PC-3 (cell line): ENCODE measurements at regions of chr6 and their contacts with region 1.

Region 1: GRCh38 chr6:146700078-146700686 is 101.4 kb downstream of the ADGB start:
- DNase-seq: peak; percentile 83
- ATAC-seq: no peak
- H3K4me3 ChIP-seq: no peak overlapping the region
- H3K27ac ChIP-seq: no peak overlapping the region
- H3K4me1 ChIP-seq: no peaks in the 10 kb centered on the region
- H3K27me3 ChIP-seq: no peaks in the 10 kb centered on the region
- CTCF ChIP-seq: peak; percentile 78

Region 2: DNA sequence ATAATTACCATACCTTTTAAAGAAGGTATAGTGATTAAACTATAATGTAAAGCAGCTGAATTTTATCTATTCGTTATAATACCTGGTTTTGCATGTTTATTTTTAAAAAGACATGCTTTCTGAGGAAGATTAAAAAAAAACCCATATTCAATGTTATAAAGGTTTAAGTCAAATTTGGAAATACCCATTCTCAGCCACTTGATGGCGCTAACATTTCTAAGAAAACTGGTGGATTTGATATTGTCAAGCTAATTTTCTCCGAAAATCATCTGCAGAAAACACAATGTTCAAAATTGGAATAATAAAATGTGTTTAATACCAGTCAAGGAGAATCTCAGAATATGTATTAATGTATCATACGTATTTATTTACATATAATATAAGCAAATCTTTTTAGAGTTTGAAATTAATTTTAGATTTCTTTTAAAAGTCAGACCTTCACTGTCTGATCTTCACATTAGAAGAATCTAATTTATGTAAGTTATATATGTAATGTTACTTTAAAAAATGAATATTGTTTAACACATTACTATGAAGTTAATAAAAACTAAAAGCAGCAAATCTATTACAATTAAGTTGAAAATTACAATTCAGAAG is 771.0 kb before region 1 on chr6:
- CTCF ChIA-PET with region 1: no interaction called
- POLR2A ChIA-PET with region 1: no interaction called
- intact Hi-C with region 1: loop called (anchors 2 kb)
- DNase-seq: peak; percentile 46
- ATAC-seq: no peak
- H3K4me3 ChIP-seq: no peak overlapping the region
- H3K27ac ChIP-seq: no peak overlapping the region
- H3K4me1 ChIP-seq: no peaks in the 10 kb centered on the region
- H3K27me3 ChIP-seq: no peaks in the 10 kb centered on the region
- CTCF ChIP-seq: peak; percentile 67

Region 3: DNA sequence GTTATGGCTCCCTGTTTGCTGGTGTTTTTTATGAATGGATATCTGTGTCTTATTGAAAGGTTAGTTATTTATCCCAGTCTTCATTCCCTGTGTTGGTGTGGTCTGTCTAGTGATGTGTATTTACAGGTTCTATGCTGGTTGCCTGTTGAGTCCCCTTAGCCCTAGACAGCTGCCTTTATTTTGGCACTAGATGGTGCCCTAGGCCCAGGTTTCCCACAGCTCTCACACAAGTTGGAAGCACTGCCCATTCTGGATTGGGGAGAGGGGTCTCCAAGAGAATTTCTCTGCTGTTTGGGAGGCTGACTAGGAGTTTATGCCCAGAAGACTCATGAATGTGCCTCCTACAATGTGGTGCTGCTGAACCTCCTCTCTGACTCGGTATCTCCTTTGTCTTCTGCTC is 658.9 kb before region 1 on chr6:
- CTCF ChIA-PET with region 1: no interaction called
- POLR2A ChIA-PET with region 1: no interaction called
- intact Hi-C with region 1: loop called (anchors 1 kb)
- DNase-seq: peak; percentile 31
- ATAC-seq: no peak
- H3K4me3 ChIP-seq: no peak overlapping the region
- H3K27ac ChIP-seq: no peak overlapping the region
- H3K4me1 ChIP-seq: no peaks in the 10 kb centered on the region
- H3K27me3 ChIP-seq: peaks cover 14% of the 10 kb centered on the region; the same call in 1 of the 2 replicates
- CTCF ChIP-seq: peak; percentile 59

Region 4: DNA sequence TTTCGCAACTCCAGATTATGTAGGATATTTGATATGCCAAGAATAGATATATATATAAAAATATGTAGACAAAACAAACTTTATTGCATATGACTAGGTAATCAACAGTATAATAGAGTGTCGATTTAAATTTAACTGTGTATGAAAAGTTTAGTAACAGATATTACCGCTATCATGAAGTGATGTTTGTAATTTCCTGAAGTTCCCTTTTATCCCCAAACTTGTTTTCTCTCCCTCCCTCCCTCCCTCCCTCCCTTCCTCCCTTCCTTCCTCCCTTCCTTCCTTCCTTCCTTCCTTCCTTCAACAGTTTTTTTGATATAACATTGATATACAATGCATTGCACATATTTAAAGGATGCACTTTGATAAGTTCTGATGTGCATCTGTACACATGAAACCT is 86.2 kb before region 1 on chr6:
- CTCF ChIA-PET with region 1: no interaction called
- POLR2A ChIA-PET with region 1: no interaction called
- intact Hi-C with region 1: no loop called
- DNase-seq: no peak
- ATAC-seq: no peak
- H3K4me3 ChIP-seq: no peak overlapping the region
- H3K27ac ChIP-seq: no peak overlapping the region
- H3K4me1 ChIP-seq: no peaks in the 10 kb centered on the region
- H3K27me3 ChIP-seq: peaks cover 5% of the 10 kb centered on the region; the same call in 1 of the 2 replicates
- CTCF ChIP-seq: no peak